Mammary epithelial cell (primary cell): ENCODE measurements at regions of chr4 and their contacts with region 1.

Region 1: DNA sequence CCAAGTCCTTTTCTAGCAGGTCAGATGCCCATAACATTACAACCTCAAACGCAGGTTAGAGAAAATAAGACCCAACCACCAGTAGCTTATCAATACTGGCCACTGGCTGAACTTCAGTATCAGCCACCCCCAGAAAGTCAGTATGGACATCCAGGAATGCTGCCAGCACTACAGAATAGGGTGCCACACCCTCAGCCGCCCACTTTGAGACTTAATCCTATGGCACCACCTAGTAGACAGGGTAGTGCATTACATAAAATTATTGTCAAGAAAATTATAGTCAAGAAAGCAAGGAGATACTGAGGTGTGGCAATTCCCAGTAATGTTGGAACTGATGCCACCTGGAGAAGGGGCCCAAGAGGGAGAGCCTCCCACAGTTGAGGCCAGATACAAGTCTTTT is 19.9 kb upstream of the TRIM61 start:
- DNase-seq: peak; percentile 38
- H3K4me3 ChIP-seq: no peak overlapping the region
- H3K27ac ChIP-seq: no peak overlapping the region
- H3K4me1 ChIP-seq: no peaks in the 10 kb centered on the region
- H3K27me3 ChIP-seq: peaks cover 2% of the 10 kb centered on the region
- CTCF ChIP-seq: peak; percentile 14 to 51

Region 2: DNA sequence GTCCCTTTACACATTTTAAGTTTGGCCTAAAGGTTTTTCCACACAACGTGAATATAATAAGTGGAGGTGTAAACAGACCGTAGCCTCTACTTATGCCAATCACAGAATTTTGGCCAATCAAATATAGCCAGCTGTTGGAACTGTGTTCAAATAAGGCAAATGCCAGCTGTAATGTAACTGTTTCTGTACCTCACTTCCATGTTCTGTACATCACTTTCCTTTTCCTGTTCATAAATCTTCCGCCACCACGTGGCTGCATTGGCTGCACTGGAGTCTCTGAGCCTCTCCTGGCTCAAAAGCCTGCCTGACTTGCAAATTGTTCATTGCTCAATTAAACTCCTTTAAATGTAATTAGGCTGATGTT is 348.5 kb before region 1 on chr4:
- CTCF ChIA-PET with region 1: no interaction called
- dilution Hi-C with region 1: no loop called
- in situ Hi-C with region 1: no loop called
- intact Hi-C with region 1: no loop called
- DNase-seq: no peak
- H3K4me3 ChIP-seq: no peak overlapping the region
- H3K27ac ChIP-seq: peak overlapping the region; percentile 71
- H3K4me1 ChIP-seq: peaks cover 13% of the 10 kb centered on the region
- H3K27me3 ChIP-seq: no peaks in the 10 kb centered on the region
- CTCF ChIP-seq: no peak

Region 3: GRCh38 chr4:164768516-164768915 is 228.8 kb before region 1 on chr4:
- CTCF ChIA-PET with region 1: no interaction called
- dilution Hi-C with region 1: no loop called
- in situ Hi-C with region 1: no loop called
- intact Hi-C with region 1: loop called (anchors 1 kb)
- DNase-seq: no peak
- H3K4me3 ChIP-seq: no peak overlapping the region
- H3K27ac ChIP-seq: no peak overlapping the region
- H3K4me1 ChIP-seq: no peaks in the 10 kb centered on the region
- H3K27me3 ChIP-seq: peaks cover 2% of the 10 kb centered on the region
- CTCF ChIP-seq: peak; percentile 35 to 43

Region 4: GRCh38 chr4:164866817-164867490 is 130.4 kb before region 1 on chr4:
- CTCF ChIA-PET with region 1: no interaction called
- dilution Hi-C with region 1: no loop called
- in situ Hi-C with region 1: no loop called
- intact Hi-C with region 1: no loop called
- DNase-seq: no peak
- H3K4me3 ChIP-seq: no peak overlapping the region
- H3K27ac ChIP-seq: no peak overlapping the region
- H3K4me1 ChIP-seq: no peaks in the 10 kb centered on the region
- H3K27me3 ChIP-seq: no peaks in the 10 kb centered on the region
- CTCF ChIP-seq: no peak

Region 5: GRCh38 chr4:164937576-164938270 is 59.6 kb before region 1 on chr4:
- CTCF ChIA-PET with region 1: no interaction called
- dilution Hi-C with region 1: no loop called
- in situ Hi-C with region 1: no loop called
- intact Hi-C with region 1: loop called (anchors 10 kb)
- DNase-seq: no peak
- H3K4me3 ChIP-seq: no peak overlapping the region
- H3K27ac ChIP-seq: no peak overlapping the region
- H3K4me1 ChIP-seq: no peaks in the 10 kb centered on the region
- H3K27me3 ChIP-seq: no peaks in the 10 kb centered on the region
- CTCF ChIP-seq: peak; percentile 8 to 21

Region 6: DNA sequence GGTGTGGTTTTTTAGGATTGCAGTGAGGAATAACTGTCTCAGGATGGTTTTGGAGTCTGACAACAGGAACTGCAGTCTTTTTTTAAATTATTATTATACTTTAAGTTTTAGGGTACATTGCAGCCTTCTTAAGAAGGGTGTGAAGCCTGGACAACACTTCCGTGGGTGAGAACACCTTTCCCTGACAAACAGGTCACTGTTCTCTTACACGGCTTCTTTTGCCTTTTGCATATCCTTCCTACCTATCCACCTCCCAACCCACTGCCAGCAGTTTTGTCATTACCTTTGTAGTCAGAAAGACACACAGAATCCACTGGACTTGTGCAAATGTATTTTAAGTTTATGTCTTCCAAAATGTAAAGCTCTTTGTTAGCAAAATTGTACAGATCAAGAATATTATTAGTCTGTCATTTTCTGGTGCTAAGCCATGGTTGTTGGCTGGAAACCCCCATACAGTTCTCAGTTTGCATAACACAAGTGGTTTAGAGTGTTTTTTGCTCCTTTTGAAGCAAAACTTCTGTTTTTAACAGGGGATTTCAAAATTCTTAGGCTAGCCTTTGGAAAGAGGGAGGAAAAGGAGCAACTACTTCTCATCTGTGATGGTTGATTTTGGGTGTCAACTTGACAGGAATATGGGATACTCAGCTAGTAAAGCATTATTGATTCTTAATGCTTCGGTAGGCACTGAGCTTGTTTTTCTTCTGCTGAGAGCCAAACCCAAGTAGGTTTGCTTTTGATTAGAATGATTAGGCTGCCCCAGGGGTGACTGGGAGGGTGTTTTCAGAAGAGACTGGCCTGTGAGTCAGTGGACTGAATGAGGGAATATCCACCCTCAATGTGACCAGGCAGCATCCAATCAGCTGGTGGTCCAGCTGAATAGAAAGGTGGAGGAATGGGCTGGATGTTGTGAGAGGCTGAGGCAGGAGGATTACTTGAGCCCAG is 180.7 kb after region 1 on chr4:
- CTCF ChIA-PET with region 1: no interaction called
- dilution Hi-C with region 1: no loop called
- in situ Hi-C with region 1: no loop called
- intact Hi-C with region 1: no loop called
- DNase-seq: peak; percentile 19
- H3K4me3 ChIP-seq: no peak overlapping the region
- H3K27ac ChIP-seq: no peak overlapping the region
- H3K4me1 ChIP-seq: no peaks in the 10 kb centered on the region
- H3K27me3 ChIP-seq: no peaks in the 10 kb centered on the region
- CTCF ChIP-seq: no peak